Activated CD4-positive, alpha-beta T cell treated with anti-CD3 and anti-CD28 coated beads, Interleukin-2, amount 10 ng/mL, durations not matched to agents 24 days and 14 days (primary cell): ENCODE measurements at regions of chr4 and their contacts with region 1.

Region 1: DNA sequence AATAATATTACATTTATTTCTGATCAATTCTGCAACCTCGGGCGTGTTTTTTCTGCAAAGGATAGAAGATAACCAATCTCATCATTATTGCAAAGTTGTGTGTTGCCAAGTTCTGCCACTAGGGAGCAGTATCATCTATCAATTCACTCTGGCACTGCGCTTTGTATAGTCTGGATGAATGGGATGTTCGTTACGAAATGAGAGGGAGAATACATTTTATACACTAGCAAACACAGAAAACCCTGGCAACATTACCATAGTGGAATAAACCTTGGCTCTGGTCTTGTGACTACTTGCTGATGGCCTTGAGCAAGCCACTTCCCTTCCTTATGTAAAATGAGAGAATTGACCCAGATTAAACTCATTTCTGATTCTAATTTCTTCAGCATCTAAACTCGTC is 97.5 kb upstream of the ZNF518B start:
- DNase-seq: peak; percentile 84
- H3K4me3 Mint-ChIP-seq: no peak overlapping the region
- H3K27ac Mint-ChIP-seq: no peak overlapping the region
- H3K4me1 Mint-ChIP-seq: peaks cover 2% of the 10 kb centered on the region
- H3K27me3 Mint-ChIP-seq: peaks cover 5% of the 10 kb centered on the region

Region 2: DNA sequence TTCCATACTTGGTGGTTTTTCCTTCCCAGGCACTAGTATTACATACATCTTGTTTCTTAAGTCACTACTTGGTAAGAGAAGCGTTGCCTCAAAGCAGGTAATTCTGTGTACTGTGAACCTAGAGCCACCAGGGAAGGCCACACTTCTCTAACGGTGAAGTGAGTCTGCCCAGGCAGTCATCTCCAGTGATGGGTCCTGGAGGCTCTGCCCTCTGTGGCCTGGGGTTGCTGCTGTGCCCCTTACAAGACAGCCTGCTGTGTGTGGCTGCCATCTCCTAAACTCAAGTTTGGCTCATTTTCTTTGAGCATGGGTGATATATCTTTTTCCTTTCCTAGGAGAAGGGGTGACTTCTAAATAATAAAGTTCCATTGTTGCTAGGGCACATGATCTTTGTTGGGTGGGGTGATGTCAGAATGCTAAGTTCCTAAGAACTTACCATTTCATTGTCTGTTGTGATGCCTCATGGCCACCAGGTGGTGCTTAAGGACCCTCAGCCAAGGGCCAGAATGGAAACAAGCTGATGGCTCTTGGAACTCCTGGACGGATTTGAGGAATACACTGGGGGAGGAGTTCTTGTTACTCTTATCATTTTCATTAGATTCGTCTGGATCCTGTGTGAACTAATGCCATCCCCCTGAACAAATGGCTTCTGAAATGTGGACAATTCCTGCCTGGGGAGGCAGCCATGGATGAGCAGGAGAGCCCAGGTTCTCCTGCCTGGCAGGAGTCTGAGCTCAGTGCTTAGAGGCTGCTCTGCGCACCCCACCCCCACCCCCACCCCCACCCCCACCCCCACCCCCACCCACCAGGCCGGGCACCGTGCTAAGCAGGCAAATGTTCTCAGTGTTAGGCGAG is 397.0 kb before region 1 on chr4:
- intact Hi-C with region 1: loop called (anchors 1 kb)
- DNase-seq: peak; percentile 81
- H3K4me3 Mint-ChIP-seq: no peak overlapping the region
- H3K27ac Mint-ChIP-seq: peak overlapping the region; percentile 35
- H3K4me1 Mint-ChIP-seq: peaks cover 26% of the 10 kb centered on the region
- H3K27me3 Mint-ChIP-seq: peaks cover 4% of the 10 kb centered on the region

Region 3: DNA sequence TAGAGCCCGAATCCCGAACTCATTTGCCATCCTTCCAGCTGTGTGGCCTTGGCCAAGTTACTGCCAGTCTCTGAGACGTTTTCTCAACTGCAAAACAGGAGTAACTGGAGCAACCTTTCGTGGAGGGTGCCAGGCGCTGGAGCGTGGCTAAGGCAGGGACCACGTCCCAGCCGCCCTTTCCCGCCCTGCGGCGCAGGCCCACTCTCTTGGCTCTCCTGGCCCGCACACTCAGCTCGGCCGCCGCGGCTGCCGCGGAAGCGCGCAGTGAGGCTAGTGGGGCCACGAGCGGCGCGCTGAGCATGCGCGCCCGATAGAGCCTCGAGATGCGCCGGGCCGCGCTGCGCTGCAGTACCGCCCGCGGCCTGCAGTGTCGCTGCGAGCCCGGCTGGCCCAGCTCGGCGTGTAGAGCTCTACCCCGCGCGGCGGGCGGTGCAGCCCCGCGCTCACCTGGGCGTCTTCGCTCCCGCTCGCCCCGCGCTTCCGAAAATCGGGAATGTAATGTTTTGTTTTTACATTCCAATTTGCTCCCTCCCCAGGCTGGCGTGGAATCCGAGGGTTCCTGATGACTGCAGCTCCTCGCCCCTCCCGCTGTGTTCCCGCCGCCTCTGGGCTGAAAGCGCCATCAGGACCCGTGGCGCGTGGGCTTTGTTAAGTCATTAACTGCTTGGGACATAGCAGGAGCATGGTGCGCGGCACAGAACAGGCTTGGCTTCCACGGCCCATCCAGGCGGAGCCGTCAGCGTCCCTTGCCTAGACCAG is 93.4 kb before region 1 on chr4:
- intact Hi-C with region 1: loop called (anchors 5 kb)
- DNase-seq: peak; percentile 95
- H3K4me3 Mint-ChIP-seq: peak overlapping the region; percentile 84
- H3K27ac Mint-ChIP-seq: peak overlapping the region; percentile 22
- H3K4me1 Mint-ChIP-seq: peaks cover 30% of the 10 kb centered on the region
- H3K27me3 Mint-ChIP-seq: peaks cover 37% of the 10 kb centered on the region

Region 4: DNA sequence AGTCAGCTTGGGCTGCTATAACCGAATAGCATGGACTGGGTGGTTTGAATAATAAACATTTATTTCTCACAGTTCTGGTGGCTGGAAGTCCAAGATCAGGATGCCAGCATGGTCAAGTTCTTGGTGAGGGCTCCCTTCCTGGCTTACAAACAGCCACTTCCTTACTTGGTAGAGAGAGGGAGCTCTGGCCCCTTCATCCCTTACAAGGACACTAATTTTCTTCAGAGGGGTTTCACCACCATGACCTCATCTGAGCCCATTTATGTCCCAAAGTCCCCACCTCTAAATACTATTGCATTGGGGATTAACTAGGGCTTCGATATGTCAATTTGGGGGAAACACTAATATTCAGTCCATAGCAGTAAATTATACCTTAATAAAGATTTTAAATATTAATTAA is 68.0 kb after region 1 on chr4:
- intact Hi-C with region 1: no loop called
- DNase-seq: no peak
- H3K4me3 Mint-ChIP-seq: no peak overlapping the region
- H3K27ac Mint-ChIP-seq: no peak overlapping the region
- H3K4me1 Mint-ChIP-seq: peaks cover 7% of the 10 kb centered on the region
- H3K27me3 Mint-ChIP-seq: peaks cover 2% of the 10 kb centered on the region

Region 5: DNA sequence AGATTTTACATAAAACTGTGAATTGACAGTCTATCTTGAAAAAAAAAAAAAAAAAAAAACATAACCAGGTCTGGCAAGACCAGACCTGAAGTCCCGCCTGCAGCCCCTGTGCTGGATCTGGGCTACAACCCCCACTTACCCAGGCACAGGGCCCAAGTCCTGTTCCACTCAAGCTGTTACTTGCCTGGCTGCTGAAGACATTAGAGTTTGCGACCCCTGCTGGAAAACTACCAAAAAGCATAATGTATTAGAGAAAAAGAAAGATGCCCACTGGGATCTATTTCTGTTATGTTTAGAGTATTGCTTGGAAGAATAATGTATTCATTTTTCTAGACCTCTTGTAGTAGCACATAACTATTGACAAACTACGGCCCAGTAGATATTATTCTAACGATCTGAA is 869.3 kb after region 1 on chr4:
- intact Hi-C with region 1: loop called (anchors 2 kb)
- DNase-seq: peak; percentile 71
- H3K4me3 Mint-ChIP-seq: no peak overlapping the region
- H3K27ac Mint-ChIP-seq: no peak overlapping the region
- H3K4me1 Mint-ChIP-seq: peaks cover 5% of the 10 kb centered on the region
- H3K27me3 Mint-ChIP-seq: peaks cover 23% of the 10 kb centered on the region

Region 6: DNA sequence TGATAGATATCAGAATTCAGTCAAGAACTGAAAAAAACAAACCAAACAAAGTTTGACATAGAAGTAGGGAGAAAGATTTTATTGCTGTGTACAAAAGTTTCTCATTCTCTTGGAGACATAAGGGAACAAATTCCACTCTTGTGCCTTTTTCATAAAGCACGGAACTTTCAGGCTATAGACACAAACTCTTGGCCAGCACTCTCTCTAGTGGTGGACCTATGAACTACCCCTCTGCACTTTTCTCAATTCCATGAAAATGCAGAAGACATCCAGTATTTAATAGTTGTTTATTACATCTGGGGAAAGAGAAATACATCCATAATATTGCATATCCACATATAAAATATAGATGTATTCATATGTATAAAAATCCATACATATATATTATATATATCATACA is 1165.6 kb after region 1 on chr4:
- intact Hi-C with region 1: loop called (anchors 10 kb)
- DNase-seq: no peak
- H3K4me3 Mint-ChIP-seq: no peak overlapping the region
- H3K27ac Mint-ChIP-seq: no peak overlapping the region
- H3K4me1 Mint-ChIP-seq: no peaks in the 10 kb centered on the region
- H3K27me3 Mint-ChIP-seq: no peaks in the 10 kb centered on the region